ENCODE measurements at regions of chr5 and their contacts with region 1.

Region 1: DNA sequence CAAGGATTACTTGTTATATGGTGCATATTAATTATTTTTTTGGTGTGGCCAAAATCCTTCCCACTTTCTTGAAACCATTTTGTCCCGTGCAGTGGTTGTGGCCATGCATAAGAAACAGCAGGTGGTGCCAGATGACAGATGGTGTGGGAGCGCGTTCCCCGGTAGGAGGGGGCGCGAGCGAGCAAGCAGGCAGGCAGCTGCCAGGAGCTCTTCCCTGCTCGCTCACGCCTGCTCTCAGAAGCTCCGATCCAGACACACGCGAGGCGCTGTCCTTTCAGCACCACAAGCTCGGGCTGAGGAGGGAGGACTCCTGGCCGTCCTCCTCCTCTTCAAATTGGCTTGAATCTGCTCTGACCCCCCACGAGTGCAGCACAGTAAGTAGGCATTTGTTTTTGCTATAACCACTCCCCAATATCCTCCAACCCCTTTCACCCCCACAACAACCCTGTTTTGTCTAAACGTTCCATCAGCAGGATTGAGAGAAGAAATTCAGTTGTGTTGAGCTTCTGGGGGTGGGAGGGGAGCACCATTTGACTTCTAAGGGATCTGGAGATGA is at the start of gene NSG2:
- DNase-seq: peak; percentile 93 to 97 (median 96)
- H3K4me3 ChIP-seq: no peak within 1 kb of the TSS
- H3K27ac ChIP-seq: no peak within 1 kb of the TSS
- H3K4me1 ChIP-seq: no peaks in the 10 kb centered on the region
- H3K27me3 ChIP-seq: peaks cover 0 to 6% (median 0%) of the 10 kb centered on the region in 5 experiments

Region 2: DNA sequence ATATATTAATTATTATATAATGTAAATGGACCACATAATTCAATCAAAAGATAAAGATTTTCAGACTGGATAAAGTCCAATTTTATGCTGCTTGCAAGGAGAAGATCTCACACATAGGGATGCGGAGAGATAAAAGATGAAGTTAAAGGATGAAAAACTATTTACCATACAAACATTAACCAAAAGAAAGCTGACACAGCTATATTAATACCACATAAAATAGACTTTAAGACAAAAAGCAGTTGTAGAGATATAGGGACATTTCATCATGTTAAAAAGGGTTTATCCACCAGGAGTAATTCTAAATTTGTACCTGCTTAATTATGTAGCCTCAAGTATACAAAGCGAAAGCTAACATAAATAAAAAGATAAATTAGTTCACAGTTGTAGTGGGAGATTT is 15.3 kb before region 1 on chr5:
- CTCF ChIA-PET with region 1: no interaction called
- POLR2A ChIA-PET with region 1: no interaction called
- DNase-seq: no peak
- H3K4me3 ChIP-seq: no peak overlapping the region
- H3K27ac ChIP-seq: no peak overlapping the region
- H3K4me1 ChIP-seq: no peaks in the 10 kb centered on the region
- H3K27me3 ChIP-seq: peaks cover 0 to 6% (median 3%) of the 10 kb centered on the region in 5 experiments

Region 3: DNA sequence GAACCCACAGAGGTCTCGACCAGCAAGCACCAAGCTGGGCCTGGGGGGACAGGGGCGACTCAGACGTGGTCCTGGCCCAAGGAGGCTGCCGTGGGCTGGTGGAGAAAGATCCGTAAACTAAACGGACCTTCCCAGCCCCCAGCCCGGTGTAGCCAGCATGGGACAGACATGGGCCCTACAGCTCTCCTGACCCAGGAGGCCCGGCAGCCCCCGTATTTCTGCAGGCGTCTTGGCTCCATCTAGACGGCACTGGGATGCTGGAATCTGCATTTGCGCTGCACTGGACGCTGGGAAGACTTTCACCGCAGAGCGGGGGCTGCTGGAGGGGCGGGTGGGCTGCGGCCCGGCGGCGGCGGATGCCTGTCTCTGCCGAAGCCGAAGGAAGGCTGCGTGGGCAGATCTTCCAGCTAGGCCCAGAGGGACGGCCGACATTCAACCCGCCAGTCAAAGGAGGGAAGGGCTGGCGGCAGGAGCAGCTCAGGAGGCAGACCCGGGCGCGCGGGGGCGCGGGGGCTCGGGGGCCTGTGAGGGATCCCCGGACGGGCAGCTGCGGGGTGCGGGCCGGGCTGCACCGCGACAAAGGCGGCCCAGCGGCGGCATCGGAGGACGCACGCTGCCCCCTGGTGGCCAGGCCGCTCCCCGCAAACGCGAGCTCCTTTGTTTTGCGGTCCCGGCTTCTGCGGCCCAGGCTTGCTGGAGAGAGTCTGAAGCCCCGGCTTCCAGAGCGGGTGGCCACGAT is 266.2 kb after region 1 on chr5:
- CTCF ChIA-PET with region 1: interaction called, 88 read pairs
- POLR2A ChIA-PET with region 1: interaction called, 3 read pairs
- DNase-seq: peak; percentile 45 to 73 (median 71)
- H3K4me3 ChIP-seq: peak overlapping the region in 3 of 7 experiments; percentile 10 to 53 (median 40)
- H3K27ac ChIP-seq: no peak overlapping the region
- H3K4me1 ChIP-seq: peaks cover 0 to 8% (median 2%) of the 10 kb centered on the region in 4 experiments
- H3K27me3 ChIP-seq: peaks cover 2 to 53% (median 9%) of the 10 kb centered on the region in 5 experiments